Activated T-helper 1 cell treated with anti-CD3 and anti-CD28 coated beads, Interleukin-12 subunit alpha, Interleukin-12 subunit beta, Interleukin-2, Interleukin-4 antibody, amounts not matched to agents 30 ng/mL and 10 ng/mL and 1 ng/mL, durations not matched to agents 14 hours and 24 hours and 36 hours (primary cell): ENCODE measurements at regions of chr1 and their contacts with region 1.

Region 1: GRCh38 chr1:185156854-185157598 is at the starts of genes SWT1 and TRMT1L:
- DNase-seq: peak; percentile 98
- H3K4me3 Mint-ChIP-seq: peak within 1 kb of the TSS; percentile 98
- H3K27ac Mint-ChIP-seq: peak within 1 kb of the TSS; percentile 97
- H3K4me1 Mint-ChIP-seq: peaks cover 59% of the 10 kb centered on the region
- H3K27me3 Mint-ChIP-seq: no peaks in the 10 kb centered on the region
- total RNA-seq, gene SWT1: 1.3 and 2.3 TPM in 2 replicates
- total RNA-seq, gene TRMT1L: 16.7 and 21.9 TPM in 2 replicates

Region 2: GRCh38 chr1:183471743-183472487 is 1685.1 kb before region 1 on chr1:
- intact Hi-C with region 1: loop called (anchors 2 kb)
- DNase-seq: peak; percentile 91
- H3K4me3 Mint-ChIP-seq: peak overlapping the region; percentile 90
- H3K27ac Mint-ChIP-seq: peak overlapping the region; percentile 99
- H3K4me1 Mint-ChIP-seq: peaks cover 28% of the 10 kb centered on the region
- H3K27me3 Mint-ChIP-seq: peaks cover 2% of the 10 kb centered on the region

Region 3: GRCh38 chr1:184051485-184052193 is 1105.4 kb before region 1 on chr1 and contains the start of gene TSEN15:
- intact Hi-C with region 1: loop called (anchors 5 kb)
- DNase-seq: peak; percentile 71
- H3K4me3 Mint-ChIP-seq: peak within 1 kb of the TSS; percentile 99
- H3K27ac Mint-ChIP-seq: peak within 1 kb of the TSS; percentile 99
- H3K4me1 Mint-ChIP-seq: peaks cover 40% of the 10 kb centered on the region
- H3K27me3 Mint-ChIP-seq: peaks cover 28% of the 10 kb centered on the region
- total RNA-seq, gene TSEN15: 49.8 and 50.2 TPM in 2 replicates

Region 4: GRCh38 chr1:184805667-184806295 is 351.2 kb before region 1 on chr1:
- intact Hi-C with region 1: loop called (anchors 5 kb)
- DNase-seq: peak; percentile 68
- H3K4me3 Mint-ChIP-seq: no peak overlapping the region
- H3K27ac Mint-ChIP-seq: no peak overlapping the region
- H3K4me1 Mint-ChIP-seq: peaks cover 6% of the 10 kb centered on the region
- H3K27me3 Mint-ChIP-seq: no peaks in the 10 kb centered on the region

Region 5: GRCh38 chr1:184973272-184974055 is 183.6 kb before region 1 on chr1:
- intact Hi-C with region 1: loop called (anchors 2 kb)
- DNase-seq: no peak
- H3K4me3 Mint-ChIP-seq: peak overlapping the region; percentile 90
- H3K27ac Mint-ChIP-seq: peak overlapping the region; percentile 95
- H3K4me1 Mint-ChIP-seq: peaks cover 67% of the 10 kb centered on the region
- H3K27me3 Mint-ChIP-seq: peaks cover 15% of the 10 kb centered on the region

Region 6: GRCh38 chr1:185008838-185009237 is 148.2 kb before region 1 on chr1:
- intact Hi-C with region 1: no loop called
- DNase-seq: no peak
- H3K4me3 Mint-ChIP-seq: no peak overlapping the region
- H3K27ac Mint-ChIP-seq: no peak overlapping the region
- H3K4me1 Mint-ChIP-seq: no peaks in the 10 kb centered on the region
- H3K27me3 Mint-ChIP-seq: peaks cover 3% of the 10 kb centered on the region

Region 7: DNA sequence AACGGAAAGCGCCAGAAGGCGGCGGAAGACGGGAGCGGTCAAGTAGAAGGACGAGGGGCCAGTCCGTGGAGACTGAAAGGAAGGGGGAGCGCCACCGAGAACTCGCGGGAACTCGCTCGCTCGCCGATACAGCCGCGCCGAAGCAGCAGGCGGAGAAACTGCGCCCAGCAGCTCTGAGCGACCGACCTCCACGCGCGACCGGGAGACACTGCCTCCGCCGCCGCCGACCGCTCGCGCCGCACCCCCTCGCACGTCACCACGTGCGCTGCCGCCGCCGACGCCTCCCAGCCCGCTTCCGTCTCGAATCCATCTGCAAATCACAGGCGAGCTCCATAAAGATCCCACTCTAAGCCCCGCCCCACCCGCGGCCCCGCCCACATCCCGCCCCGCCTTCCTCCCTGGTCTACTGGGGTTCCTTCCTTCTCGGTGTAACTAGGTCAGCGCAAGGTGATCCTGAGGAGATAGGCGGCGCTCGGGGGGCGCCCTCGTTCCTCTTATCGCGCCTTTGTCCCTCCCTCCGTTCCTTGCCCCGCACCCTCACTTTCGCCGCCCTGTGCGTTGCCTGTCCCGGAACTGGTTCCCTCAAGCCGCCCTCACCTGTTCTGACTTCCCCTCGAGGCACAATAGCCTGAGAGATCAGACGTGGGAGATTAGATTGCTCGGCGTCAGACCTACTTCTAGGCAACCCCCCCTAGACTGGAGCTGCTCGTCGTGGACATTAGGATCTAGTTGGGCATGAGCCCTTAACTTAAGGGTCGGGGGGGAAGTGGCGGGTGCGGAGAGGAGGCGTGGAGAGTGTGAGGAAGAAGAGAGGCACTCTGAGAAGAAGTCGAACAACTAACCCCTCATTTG is 160.2 kb after region 1 on chr1 and contains the start of gene IVNS1ABP:
- intact Hi-C with region 1: loop called (anchors 1 kb)
- DNase-seq: peak; percentile 92
- H3K4me3 Mint-ChIP-seq: peak within 1 kb of the TSS; percentile 94
- H3K27ac Mint-ChIP-seq: peak within 1 kb of the TSS; percentile 97
- H3K4me1 Mint-ChIP-seq: peaks cover 50% of the 10 kb centered on the region
- H3K27me3 Mint-ChIP-seq: no peaks in the 10 kb centered on the region
- total RNA-seq, gene IVNS1ABP: 207 and 225 TPM in 2 replicates

Region 8: GRCh38 chr1:185681034-185681633 is 524.1 kb after region 1 on chr1:
- intact Hi-C with region 1: loop called (anchors 5 kb)
- DNase-seq: peak; percentile 20
- H3K4me3 Mint-ChIP-seq: no peak overlapping the region
- H3K27ac Mint-ChIP-seq: no peak overlapping the region
- H3K4me1 Mint-ChIP-seq: peaks cover 21% of the 10 kb centered on the region
- H3K27me3 Mint-ChIP-seq: peaks cover 14% of the 10 kb centered on the region